Activated CD4-positive, alpha-beta memory T cell treated with anti-CD3 and anti-CD28 coated beads, Interleukin-2, amount 10 ng/mL, durations not matched to agents 7 days and 5 days (primary cell): ENCODE measurements at regions of chr7 and their contacts with region 1.

Region 1: GRCh38 chr7:47945261-47946001 is 2.8 kb downstream of the PKD1L1 start:
- DNase-seq: peak; percentile 80
- H3K4me3 Mint-ChIP-seq: no peak overlapping the region
- H3K27ac Mint-ChIP-seq: no peak overlapping the region
- H3K4me1 Mint-ChIP-seq: peaks cover 5% of the 10 kb centered on the region
- H3K27me3 Mint-ChIP-seq: peaks cover 2% of the 10 kb centered on the region

Region 2: DNA sequence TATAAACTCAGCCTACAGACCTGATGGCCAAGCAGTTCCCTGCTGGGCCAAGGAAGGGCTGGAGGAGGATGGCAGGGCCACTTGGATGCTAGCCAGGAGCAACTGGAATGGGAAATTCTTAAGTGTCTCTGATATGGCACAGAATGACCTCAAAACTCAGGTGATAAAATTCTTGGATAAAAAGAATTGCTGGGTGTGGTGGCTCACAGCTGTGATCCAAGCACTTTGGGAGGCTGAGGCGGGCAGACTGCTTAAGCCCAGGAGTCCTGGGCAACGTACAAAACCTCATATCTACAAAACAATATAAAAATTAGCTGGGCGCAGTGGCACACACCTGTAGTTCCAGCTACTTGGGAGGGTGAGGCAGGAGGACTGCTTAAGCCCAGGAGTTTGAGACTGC is 16.8 kb after region 1 on chr7:
- CTCF ChIA-PET with region 1: interaction called, 14 read pairs
- POLR2A ChIA-PET with region 1: no interaction called
- DNase-seq: no peak
- H3K4me3 Mint-ChIP-seq: no peak overlapping the region
- H3K27ac Mint-ChIP-seq: no peak overlapping the region
- H3K4me1 Mint-ChIP-seq: no peaks in the 10 kb centered on the region
- H3K27me3 Mint-ChIP-seq: no peaks in the 10 kb centered on the region

Region 3: GRCh38 chr7:47968847-47969774 is 23.7 kb after region 1 on chr7:
- CTCF ChIA-PET with region 1: interaction called, 13 read pairs
- POLR2A ChIA-PET with region 1: no interaction called
- DNase-seq: peak; percentile 52
- H3K4me3 Mint-ChIP-seq: no peak overlapping the region
- H3K27ac Mint-ChIP-seq: no peak overlapping the region
- H3K4me1 Mint-ChIP-seq: peaks cover 14% of the 10 kb centered on the region
- H3K27me3 Mint-ChIP-seq: no peaks in the 10 kb centered on the region

Region 4: DNA sequence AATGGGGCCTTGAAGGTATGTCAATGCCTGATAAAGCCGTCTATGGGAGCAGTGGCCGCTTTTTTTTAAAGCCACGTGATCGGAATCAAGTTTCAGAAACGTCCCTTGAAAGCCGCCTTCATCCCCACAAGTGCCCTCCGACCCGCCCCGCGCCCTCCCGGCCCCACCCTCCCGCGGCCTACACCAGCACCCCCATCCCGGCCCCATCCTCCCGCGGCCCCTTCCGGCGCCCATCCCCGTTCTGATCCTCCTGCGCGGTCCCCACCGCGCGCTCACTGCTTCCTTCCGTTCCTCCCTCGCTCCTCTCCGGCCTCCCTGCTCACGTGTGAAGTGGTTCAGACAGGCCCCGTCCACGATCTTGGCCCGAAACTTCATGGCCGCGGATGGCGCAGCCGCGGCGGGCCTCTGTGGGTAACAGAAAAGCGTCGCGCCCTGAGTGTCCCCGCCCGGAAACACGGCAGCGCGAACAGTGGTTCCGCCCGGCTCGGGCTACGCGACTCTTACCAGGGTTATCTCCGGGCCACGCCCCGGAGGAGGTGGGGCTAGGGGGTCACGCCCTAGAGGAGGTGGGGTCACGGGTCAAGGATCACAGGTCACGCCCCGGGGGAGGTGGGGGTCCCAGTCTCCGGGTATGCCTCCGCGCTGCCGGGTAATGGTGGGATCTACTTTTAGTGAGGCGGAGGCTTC is 33.9 kb after region 1 on chr7 and contains the start of gene HUS1:
- CTCF ChIA-PET with region 1: interaction called, 10 read pairs
- POLR2A ChIA-PET with region 1: interaction called, 3 read pairs
- DNase-seq: peak; percentile 96
- H3K4me3 Mint-ChIP-seq: peak within 1 kb of the TSS; percentile 87
- H3K27ac Mint-ChIP-seq: peak within 1 kb of the TSS; percentile 97
- H3K4me1 Mint-ChIP-seq: peaks cover 24% of the 10 kb centered on the region
- H3K27me3 Mint-ChIP-seq: peaks cover under 1% of the 10 kb centered on the region
- total RNA-seq, gene HUS1: 34.1 to 35.0 TPM

Region 5: DNA sequence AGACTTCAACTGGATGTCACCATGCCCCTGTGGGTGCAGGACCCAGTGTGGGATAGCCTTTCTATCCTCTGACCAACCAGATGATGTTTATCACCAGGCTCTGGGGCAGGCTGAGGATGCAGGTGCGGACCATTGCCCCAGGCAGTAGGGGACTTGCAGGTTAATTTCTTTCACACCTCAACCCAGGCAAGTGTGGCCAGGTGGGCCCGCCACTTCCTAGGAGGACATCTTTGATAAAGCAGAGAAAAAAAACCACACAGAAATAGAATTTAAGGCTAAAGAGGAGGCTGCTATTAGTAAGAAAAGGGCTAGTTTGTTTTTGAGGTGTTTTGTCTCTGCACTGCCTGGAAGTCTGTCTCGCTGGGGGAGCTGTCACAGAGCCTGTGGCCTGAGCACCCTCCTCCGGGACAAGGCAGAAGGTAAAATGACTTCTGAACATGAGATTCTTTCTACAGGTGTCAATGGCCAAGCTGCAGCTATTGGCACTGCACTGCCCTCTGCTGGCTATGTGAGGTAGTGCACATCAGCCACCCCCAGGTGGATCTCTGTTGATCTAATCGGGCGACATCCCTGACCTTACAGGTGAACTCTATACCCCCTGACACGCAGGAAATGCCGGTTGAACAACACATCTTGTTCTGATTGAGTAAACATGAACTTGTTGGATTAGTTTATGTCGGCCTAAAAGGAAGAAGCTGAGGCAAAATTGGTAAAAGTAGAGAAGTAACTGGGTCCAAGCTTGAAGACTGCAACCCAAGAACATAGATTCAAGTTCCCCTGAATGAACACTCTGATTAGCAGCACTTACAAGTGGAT is 164.6 kb after region 1 on chr7:
- CTCF ChIA-PET with region 1: interaction called, 46 read pairs
- POLR2A ChIA-PET with region 1: interaction called, 10 read pairs
- DNase-seq: peak; percentile 90
- H3K4me3 Mint-ChIP-seq: no peak overlapping the region
- H3K27ac Mint-ChIP-seq: peak overlapping the region; percentile 52
- H3K4me1 Mint-ChIP-seq: peaks cover 14% of the 10 kb centered on the region
- H3K27me3 Mint-ChIP-seq: no peaks in the 10 kb centered on the region

Region 6: GRCh38 chr7:48154792-48155413 is 209.5 kb after region 1 on chr7:
- CTCF ChIA-PET with region 1: interaction called, 50 read pairs
- POLR2A ChIA-PET with region 1: interaction called, 11 read pairs
- DNase-seq: peak; percentile 53
- H3K4me3 Mint-ChIP-seq: no peak overlapping the region
- H3K27ac Mint-ChIP-seq: no peak overlapping the region
- H3K4me1 Mint-ChIP-seq: peaks cover 2% of the 10 kb centered on the region
- H3K27me3 Mint-ChIP-seq: peaks cover 33% of the 10 kb centered on the region